Mammary epithelial cell (primary cell): ENCODE measurements at regions of chr13 and their contacts with region 1.

Region 1: DNA sequence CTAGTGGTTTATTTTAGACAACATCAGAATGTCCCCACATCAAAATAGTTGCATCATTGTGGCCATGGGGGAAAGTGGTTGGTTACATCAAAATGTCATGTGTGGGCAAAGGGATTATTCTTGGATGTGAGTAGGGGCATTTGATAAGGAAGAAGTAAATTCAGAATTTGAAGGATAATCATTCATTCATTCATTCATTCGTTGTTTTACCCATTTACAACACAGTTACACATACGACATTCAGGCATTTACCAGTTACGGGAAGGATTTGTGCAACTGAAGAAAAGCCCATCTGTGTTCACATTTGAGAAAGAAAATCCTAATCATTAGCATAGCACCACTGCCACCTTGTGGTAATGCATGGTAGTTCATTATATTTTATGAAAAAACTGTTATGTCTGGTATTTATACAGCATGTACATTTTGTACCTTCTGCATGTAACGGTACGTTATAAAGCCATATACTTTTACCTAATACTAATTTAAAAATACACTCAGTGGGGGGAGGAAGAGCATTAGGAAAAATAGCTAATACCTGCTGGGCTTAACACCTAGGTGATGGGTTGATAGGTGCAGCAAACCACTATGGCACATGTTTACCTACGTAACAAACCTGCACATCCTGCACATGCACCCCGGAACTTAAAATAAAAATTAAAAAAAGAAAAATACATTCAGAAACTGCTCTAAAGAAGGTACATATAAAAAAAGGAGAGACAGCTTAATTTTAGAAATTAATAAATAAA is 62.1 kb downstream of the DGKH start:
- DNase-seq: peak; percentile 73
- H3K4me3 ChIP-seq: no peak overlapping the region
- H3K27ac ChIP-seq: no peak overlapping the region
- H3K4me1 ChIP-seq: peaks cover 31% of the 10 kb centered on the region
- H3K27me3 ChIP-seq: no peaks in the 10 kb centered on the region
- CTCF ChIP-seq: peak; percentile 56 to 67

Region 2: GRCh38 chr13:41456768-41457588 is 653.6 kb before region 1 on chr13 and contains the start of gene RGCC:
- CTCF ChIA-PET with region 1: no interaction called
- dilution Hi-C with region 1: no loop called
- in situ Hi-C with region 1: no loop called
- intact Hi-C with region 1: loop called (anchors 10 kb)
- DNase-seq: peak; percentile 60
- H3K4me3 ChIP-seq: peak within 1 kb of the TSS; percentile 55 to 64 (median 58)
- H3K27ac ChIP-seq: no peak within 1 kb of the TSS
- H3K4me1 ChIP-seq: peaks cover 26% of the 10 kb centered on the region
- H3K27me3 ChIP-seq: no peaks in the 10 kb centered on the region
- CTCF ChIP-seq: no peak
- total RNA-seq, gene RGCC: 1.4 to 8.0 TPM

Region 3: GRCh38 chr13:41767801-41768200 is 342.8 kb before region 1 on chr13:
- CTCF ChIA-PET with region 1: no interaction called
- dilution Hi-C with region 1: no loop called
- in situ Hi-C with region 1: no loop called
- intact Hi-C with region 1: no loop called
- DNase-seq: no peak
- H3K4me3 ChIP-seq: no peak overlapping the region
- H3K27ac ChIP-seq: no peak overlapping the region
- H3K4me1 ChIP-seq: no peaks in the 10 kb centered on the region
- H3K27me3 ChIP-seq: no peaks in the 10 kb centered on the region
- CTCF ChIP-seq: no peak

Region 4: GRCh38 chr13:41905600-41906254 is 204.9 kb before region 1 on chr13:
- CTCF ChIA-PET with region 1: no interaction called
- dilution Hi-C with region 1: no loop called
- in situ Hi-C with region 1: loop called in 1 of 2 experiments (anchors 10 kb)
- intact Hi-C with region 1: loop called (anchors 1 kb)
- DNase-seq: peak; percentile 45
- H3K4me3 ChIP-seq: no peak overlapping the region
- H3K27ac ChIP-seq: no peak overlapping the region
- H3K4me1 ChIP-seq: peaks cover 10% of the 10 kb centered on the region
- H3K27me3 ChIP-seq: no peaks in the 10 kb centered on the region
- CTCF ChIP-seq: peak; percentile 74 to 79

Region 5: GRCh38 chr13:41960639-41961465 is 149.7 kb before region 1 on chr13 and contains the start of gene VWA8:
- CTCF ChIA-PET with region 1: no interaction called
- dilution Hi-C with region 1: no loop called
- in situ Hi-C with region 1: no loop called
- intact Hi-C with region 1: loop called (anchors 2 kb)
- DNase-seq: peak; percentile 84
- H3K4me3 ChIP-seq: peak within 1 kb of the TSS; percentile 82 to 88 (median 84)
- H3K27ac ChIP-seq: peak within 1 kb of the TSS; percentile 82
- H3K4me1 ChIP-seq: peaks cover 27% of the 10 kb centered on the region
- H3K27me3 ChIP-seq: no peaks in the 10 kb centered on the region
- CTCF ChIP-seq: no peak
- total RNA-seq, gene VWA8: 24.1 to 32.0 TPM

Region 6: DNA sequence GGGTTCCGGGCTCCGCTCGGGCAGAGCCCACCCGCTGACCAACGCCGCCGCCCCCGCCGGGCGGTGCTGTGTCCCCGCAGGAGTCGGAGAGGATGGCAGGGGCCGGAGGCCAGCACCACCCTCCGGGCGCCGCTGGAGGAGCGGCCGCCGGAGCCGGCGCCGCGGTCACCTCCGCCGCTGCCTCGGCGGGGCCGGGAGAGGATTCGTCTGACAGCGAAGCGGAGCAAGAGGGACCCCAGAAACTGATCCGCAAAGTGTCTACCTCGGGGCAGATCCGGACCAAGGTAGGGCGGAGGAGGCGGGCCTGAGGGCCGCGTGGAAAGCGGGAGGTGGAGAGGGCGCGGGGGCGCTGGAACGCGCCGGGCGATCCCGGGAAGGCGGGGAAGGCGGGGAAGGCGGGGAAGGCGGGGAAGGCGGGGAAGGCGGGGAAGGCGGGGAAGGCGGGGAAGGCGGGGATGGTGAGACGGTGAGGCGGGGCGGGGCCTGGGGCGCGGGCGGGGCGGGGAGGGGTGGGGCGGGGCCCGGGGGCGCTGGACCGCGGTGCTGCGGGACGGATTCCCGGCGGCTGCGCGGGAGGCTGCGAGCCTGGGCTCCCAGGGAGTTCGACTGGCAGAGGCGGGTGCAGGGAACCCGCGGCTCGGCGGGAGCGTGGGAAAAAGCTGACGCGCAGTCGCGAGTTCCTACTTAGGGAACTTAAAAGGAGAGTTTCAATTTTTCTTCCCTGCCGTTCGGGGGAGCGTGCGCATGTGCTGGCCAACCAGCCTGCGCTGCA is 61.7 kb before region 1 on chr13:
- CTCF ChIA-PET with region 1: no interaction called
- dilution Hi-C with region 1: no loop called
- in situ Hi-C with region 1: no loop called
- intact Hi-C with region 1: loop called (anchors 1 kb)
- DNase-seq: peak; percentile 80
- H3K4me3 ChIP-seq: peak overlapping the region; percentile 65 to 85 (median 85)
- H3K27ac ChIP-seq: peak overlapping the region; percentile 86
- H3K4me1 ChIP-seq: peaks cover 9% of the 10 kb centered on the region
- H3K27me3 ChIP-seq: no peaks in the 10 kb centered on the region
- CTCF ChIP-seq: peak in 1 of 2 donors; percentile 20

Region 7: GRCh38 chr13:42283574-42283973 is 173.0 kb after region 1 on chr13:
- CTCF ChIA-PET with region 1: no interaction called
- dilution Hi-C with region 1: no loop called
- in situ Hi-C with region 1: no loop called
- intact Hi-C with region 1: no loop called
- DNase-seq: no peak
- H3K4me3 ChIP-seq: no peak overlapping the region
- H3K27ac ChIP-seq: no peak overlapping the region
- H3K4me1 ChIP-seq: no peaks in the 10 kb centered on the region
- H3K27me3 ChIP-seq: no peaks in the 10 kb centered on the region
- CTCF ChIP-seq: no peak